Lower leg skin (tissue), 4 donors: ENCODE measurements at regions of chr2 and their contacts with region 1.

Region 1: DNA sequence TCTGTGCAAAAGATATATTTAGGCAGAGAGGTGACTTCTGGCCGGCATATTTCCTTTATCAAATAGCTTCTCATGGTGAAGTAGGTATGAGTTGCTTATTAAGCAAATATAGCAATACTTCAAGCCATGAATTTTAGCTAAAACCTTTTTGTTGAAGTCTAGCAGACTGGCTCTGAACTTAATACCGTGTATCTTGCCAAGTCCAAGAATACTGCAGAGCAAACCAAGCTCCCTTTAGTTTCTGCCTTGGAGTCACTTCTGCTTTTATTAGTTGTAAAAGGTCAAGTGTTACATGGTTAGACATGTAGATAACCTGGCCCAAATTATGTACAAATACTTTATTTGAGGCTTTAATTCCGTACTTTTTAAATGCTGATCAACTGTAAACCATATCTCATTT is 627.6 kb upstream of the PKDCC start:
- DNase-seq: no peak
- H3K4me3 ChIP-seq: no peak overlapping the region
- CTCF ChIP-seq: no peak
- POLR2A ChIP-seq: no peak

Region 2: DNA sequence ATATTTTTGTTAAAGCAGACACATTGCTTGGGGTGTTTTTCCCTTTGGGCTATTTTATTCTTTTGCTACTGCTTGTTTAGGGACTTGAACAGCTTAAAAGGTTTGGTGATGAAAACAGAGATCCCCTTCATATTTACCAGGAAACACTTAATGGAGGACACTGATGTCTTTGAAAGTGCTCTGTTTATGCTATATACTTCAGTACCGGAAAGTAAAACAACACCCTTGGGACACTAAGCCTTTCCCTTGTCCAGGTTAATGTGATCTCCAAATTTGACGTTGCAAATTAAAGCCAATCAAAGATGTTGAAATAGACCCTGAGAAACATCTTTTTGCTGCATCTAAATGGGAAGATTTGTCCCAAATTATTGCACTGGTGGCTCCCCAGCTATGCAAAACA is 63.0 kb after region 1 on chr2:
- intact Hi-C with region 1: loop called (anchors 5 kb)
- DNase-seq: no peak
- H3K4me3 ChIP-seq: no peak overlapping the region
- CTCF ChIP-seq: no peak
- POLR2A ChIP-seq: no peak

Region 3: GRCh38 chr2:41647468-41648050 is 227.3 kb after region 1 on chr2:
- intact Hi-C with region 1: no loop called
- DNase-seq: no peak
- H3K4me3 ChIP-seq: no peak overlapping the region
- CTCF ChIP-seq: no peak
- POLR2A ChIP-seq: no peak